Naive thymus-derived CD8-positive, alpha-beta T cell (primary cell): ENCODE measurements at regions of chr14 and their contacts with region 1.

Region 1: GRCh38 chr14:76926521-76927251 is 100.5 kb downstream of the LRRC74A start:
- DNase-seq: peak; percentile 34 to 84 (median 70)
- ATAC-seq: peak; percentile 60 to 68
- H3K4me3 Mint-ChIP-seq: peak overlapping the region; percentile 63 to 85 (median 80)
- H3K27ac Mint-ChIP-seq: peak overlapping the region; percentile 68 to 96 (median 82)
- H3K4me1 Mint-ChIP-seq: peaks cover 36 to 87% (median 80%) of the 10 kb centered on the region in 4 donors
- H3K27me3 Mint-ChIP-seq: no peaks in the 10 kb centered on the region

Region 2: GRCh38 chr14:75831458-75831857 is 1095.2 kb before region 1 on chr14:
- POLR2A ChIA-PET with region 1: no interaction called
- DNase-seq: peak in 9 of 10 donors; percentile 5 to 69 (median 48)
- ATAC-seq: peak; percentile 86 to 96
- H3K4me3 Mint-ChIP-seq: peak overlapping the region in 9 of 10 donors; percentile 9 to 70 (median 59)
- H3K27ac Mint-ChIP-seq: peak overlapping the region; percentile 20 to 90 (median 76)
- H3K4me1 Mint-ChIP-seq: peaks cover 17 to 25% (median 23%) of the 10 kb centered on the region in 4 donors
- H3K27me3 Mint-ChIP-seq: no peaks in the 10 kb centered on the region

Region 3: DNA sequence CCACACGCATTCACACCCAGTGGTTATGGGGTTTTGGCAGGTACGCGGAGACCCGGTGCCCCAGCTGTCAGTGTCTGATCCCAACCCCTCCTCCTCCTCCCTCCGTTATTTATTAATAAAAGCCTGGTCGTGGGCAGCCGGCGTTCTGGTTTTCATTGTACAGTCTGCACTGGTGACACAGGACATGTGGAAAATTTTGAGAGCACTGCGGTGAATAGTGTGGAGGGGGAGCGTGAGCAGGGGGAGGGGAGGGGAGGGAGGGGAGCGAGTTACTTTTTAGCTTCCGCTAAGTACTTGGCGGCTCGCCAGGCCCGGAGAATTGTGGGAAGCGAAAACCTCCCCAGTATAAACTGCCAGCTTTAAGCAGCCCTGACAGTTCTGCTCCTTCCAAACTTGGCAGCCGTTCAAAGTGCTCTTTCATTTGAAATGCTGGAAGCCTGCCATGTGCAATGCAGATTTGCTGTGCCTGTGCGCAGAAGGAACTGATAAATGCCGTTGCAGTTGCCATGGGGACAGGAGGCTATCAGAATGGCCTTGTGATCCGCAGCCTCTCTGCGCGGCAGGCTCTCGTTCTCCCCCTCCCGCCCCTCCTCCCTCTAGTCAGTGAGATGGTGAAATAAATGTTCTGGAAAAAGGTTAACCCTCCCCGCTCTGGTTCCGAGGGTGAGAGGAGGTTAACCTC is 113.5 kb after region 1 on chr14:
- POLR2A ChIA-PET with region 1: interaction called, 12 read pairs
- DNase-seq: peak; percentile 96 to 100 (median 98)
- ATAC-seq: peak; percentile 79 to 85
- H3K4me3 Mint-ChIP-seq: peak overlapping the region; percentile 79 to 93 (median 88)
- H3K27ac Mint-ChIP-seq: peak overlapping the region; percentile 94 to 100 (median 99)
- H3K4me1 Mint-ChIP-seq: peaks cover 49 to 96% (median 87%) of the 10 kb centered on the region in 4 donors
- H3K27me3 Mint-ChIP-seq: no peaks in the 10 kb centered on the region